ENCODE measurements at regions of chr6 and their contacts with region 1.

Region 1: GRCh38 chr6:107820338-107821261 is 3.5 kb downstream of the SCML4 start:
- DNase-seq: peak in 34 of 35 experiments; percentile 7 to 66 (median 36)
- ATAC-seq: peak in 3 of 4 experiments; percentile 14 to 27 (median 24)
- H3K4me3 ChIP-seq: peak overlapping the region; percentile 68 to 73
- H3K4me3 Mint-ChIP-seq: peak overlapping the region; percentile 89 to 96 (median 96)
- H3K27ac ChIP-seq: peak overlapping the region; percentile 93
- H3K27ac Mint-ChIP-seq: peak overlapping the region; percentile 96 to 97
- H3K4me1 ChIP-seq: peaks cover 56 to 69% of the 10 kb centered on the region in 2 experiments
- H3K4me1 Mint-ChIP-seq: peaks cover 77 to 92% (median 84%) of the 10 kb centered on the region in 3 donors
- H3K27me3 ChIP-seq: no peaks in the 10 kb centered on the region
- H3K27me3 Mint-ChIP-seq: no peaks in the 10 kb centered on the region

Region 2: GRCh38 chr6:106325336-106326178 is 1495.0 kb before region 1 on chr6 and contains the start of gene ATG5:
- CTCF ChIA-PET with region 1: no interaction called
- POLR2A ChIA-PET with region 1: interaction called in 1 of 2 experiments, 11 read pairs
- DNase-seq: peak; percentile 99 to 100 (median 100)
- ATAC-seq: peak; percentile 93 to 95 (median 94)
- H3K4me3 ChIP-seq: peak within 1 kb of the TSS; percentile 82 to 84
- H3K4me3 Mint-ChIP-seq: peak within 1 kb of the TSS; percentile 97 to 100 (median 99)
- H3K27ac ChIP-seq: peak within 1 kb of the TSS; percentile 84
- H3K27ac Mint-ChIP-seq: peak within 1 kb of the TSS; percentile 94 to 96
- H3K4me1 ChIP-seq: peaks cover 15 to 25% of the 10 kb centered on the region in 2 experiments
- H3K4me1 Mint-ChIP-seq: peaks cover 42 to 53% (median 51%) of the 10 kb centered on the region in 3 donors
- H3K27me3 ChIP-seq: peaks cover 0 to under 1% of the 10 kb centered on the region in 2 experiments
- H3K27me3 Mint-ChIP-seq: peaks cover 16 to 19% of the 10 kb centered on the region in 2 donors
- total RNA-seq, gene ATG5: 20.4 to 28.7 (median 23.7) TPM

Region 3: GRCh38 chr6:106534564-106534982 is 1286.0 kb before region 1 on chr6:
- CTCF ChIA-PET with region 1: no interaction called
- POLR2A ChIA-PET with region 1: no interaction called
- DNase-seq: peak in 4 of 35 experiments; percentile 17 to 42 (median 34)
- ATAC-seq: peak; percentile 7 to 77 (median 47)
- H3K4me3 ChIP-seq: no peak overlapping the region
- H3K4me3 Mint-ChIP-seq: peak overlapping the region in 1 of 3 donors; percentile 37
- H3K27ac ChIP-seq: peak overlapping the region; percentile 1
- H3K27ac Mint-ChIP-seq: peak overlapping the region; percentile 84 to 88
- H3K4me1 ChIP-seq: peaks cover 19 to 28% of the 10 kb centered on the region in 2 experiments
- H3K4me1 Mint-ChIP-seq: peaks cover 69 to 90% (median 86%) of the 10 kb centered on the region in 3 donors
- H3K27me3 ChIP-seq: no peaks in the 10 kb centered on the region
- H3K27me3 Mint-ChIP-seq: no peaks in the 10 kb centered on the region

Region 4: DNA sequence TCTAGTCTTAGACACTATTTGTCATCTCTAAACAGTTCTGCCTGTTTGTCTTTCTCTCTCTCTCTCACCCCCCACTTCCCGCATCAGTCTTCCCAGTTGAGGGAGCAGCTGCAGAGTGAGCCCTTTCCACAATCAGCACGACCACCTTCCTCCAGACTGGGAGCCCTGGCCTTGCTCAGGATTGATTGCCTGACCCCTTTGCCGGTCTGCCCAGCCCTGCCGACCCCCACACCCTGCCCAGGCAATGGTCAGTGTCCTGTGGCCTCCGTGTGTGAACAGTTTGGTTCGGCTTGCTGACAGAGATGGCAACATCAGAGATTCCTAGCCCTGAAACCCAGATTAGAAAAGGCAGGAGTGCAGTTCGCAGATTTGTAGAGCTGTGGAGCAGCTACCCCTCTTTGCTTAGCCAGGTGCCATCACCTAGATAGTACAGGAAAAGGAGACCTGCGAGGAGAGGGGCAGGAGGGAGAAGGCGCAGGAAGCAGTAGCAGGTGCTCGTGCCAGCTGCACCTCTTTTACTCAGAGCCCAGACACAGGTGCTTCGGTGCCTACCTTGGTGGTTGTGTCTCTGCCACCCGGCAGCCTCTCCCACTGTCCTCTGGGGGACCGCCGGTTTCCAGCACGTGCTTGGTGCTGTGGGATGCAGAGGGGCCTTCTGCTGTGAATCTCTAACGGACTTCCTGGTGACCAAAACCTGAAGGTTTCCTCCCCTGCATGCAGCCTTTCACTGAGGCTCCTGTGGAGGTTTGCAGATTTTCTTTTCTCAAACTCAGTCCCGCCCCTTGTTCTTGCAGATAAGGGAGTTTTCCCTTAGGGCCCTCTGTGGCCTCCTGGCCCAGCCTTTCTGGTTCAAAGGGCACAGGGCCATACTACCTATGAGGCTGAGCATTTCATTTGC is 88.9 kb before region 1 on chr6:
- CTCF ChIA-PET with region 1: interaction called, 3 to 19 read pairs
- POLR2A ChIA-PET with region 1: interaction called, 6 to 16 read pairs
- DNase-seq: peak in 21 of 35 experiments; percentile 17 to 55 (median 36)
- ATAC-seq: peak; percentile 49 to 62 (median 60)
- H3K4me3 ChIP-seq: peak overlapping the region; percentile 71 to 79
- H3K4me3 Mint-ChIP-seq: peak overlapping the region; percentile 94 to 97 (median 94)
- H3K27ac ChIP-seq: peak overlapping the region; percentile 78
- H3K27ac Mint-ChIP-seq: peak overlapping the region; percentile 96 to 99
- H3K4me1 ChIP-seq: peaks cover 52 to 75% of the 10 kb centered on the region in 2 experiments
- H3K4me1 Mint-ChIP-seq: peaks cover 90 to 95% (median 94%) of the 10 kb centered on the region in 3 donors
- H3K27me3 ChIP-seq: no peaks in the 10 kb centered on the region
- H3K27me3 Mint-ChIP-seq: no peaks in the 10 kb centered on the region

Region 5: DNA sequence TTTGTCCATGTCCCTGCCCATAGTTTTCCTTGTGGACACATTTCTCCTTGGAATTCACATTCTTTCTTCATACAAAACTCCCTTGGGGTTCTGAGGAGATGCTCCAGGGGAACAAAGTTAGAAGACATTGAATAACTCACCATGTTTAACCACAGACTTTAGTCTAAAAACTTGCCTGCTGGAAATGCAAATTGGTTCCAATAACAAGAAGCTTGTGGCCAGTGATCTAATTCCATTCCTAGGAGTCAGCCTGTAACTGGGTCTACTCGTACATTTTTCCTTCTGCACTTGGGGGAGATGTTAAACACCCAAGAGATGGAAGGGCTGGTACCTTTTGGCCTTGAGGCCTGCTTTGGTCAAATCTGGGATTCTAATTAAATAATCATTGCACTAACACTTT is 56.7 kb before region 1 on chr6:
- CTCF ChIA-PET with region 1: no interaction called
- POLR2A ChIA-PET with region 1: interaction called in 1 of 2 experiments, 11 read pairs
- DNase-seq: no peak
- ATAC-seq: no peak
- H3K4me3 ChIP-seq: no peak overlapping the region
- H3K4me3 Mint-ChIP-seq: no peak overlapping the region
- H3K27ac ChIP-seq: no peak overlapping the region
- H3K27ac Mint-ChIP-seq: no peak overlapping the region
- H3K4me1 ChIP-seq: peaks cover 0 to 2% of the 10 kb centered on the region in 2 experiments
- H3K4me1 Mint-ChIP-seq: peaks cover 29 to 40% (median 32%) of the 10 kb centered on the region in 3 donors
- H3K27me3 ChIP-seq: no peaks in the 10 kb centered on the region
- H3K27me3 Mint-ChIP-seq: no peaks in the 10 kb centered on the region

Region 6: DNA sequence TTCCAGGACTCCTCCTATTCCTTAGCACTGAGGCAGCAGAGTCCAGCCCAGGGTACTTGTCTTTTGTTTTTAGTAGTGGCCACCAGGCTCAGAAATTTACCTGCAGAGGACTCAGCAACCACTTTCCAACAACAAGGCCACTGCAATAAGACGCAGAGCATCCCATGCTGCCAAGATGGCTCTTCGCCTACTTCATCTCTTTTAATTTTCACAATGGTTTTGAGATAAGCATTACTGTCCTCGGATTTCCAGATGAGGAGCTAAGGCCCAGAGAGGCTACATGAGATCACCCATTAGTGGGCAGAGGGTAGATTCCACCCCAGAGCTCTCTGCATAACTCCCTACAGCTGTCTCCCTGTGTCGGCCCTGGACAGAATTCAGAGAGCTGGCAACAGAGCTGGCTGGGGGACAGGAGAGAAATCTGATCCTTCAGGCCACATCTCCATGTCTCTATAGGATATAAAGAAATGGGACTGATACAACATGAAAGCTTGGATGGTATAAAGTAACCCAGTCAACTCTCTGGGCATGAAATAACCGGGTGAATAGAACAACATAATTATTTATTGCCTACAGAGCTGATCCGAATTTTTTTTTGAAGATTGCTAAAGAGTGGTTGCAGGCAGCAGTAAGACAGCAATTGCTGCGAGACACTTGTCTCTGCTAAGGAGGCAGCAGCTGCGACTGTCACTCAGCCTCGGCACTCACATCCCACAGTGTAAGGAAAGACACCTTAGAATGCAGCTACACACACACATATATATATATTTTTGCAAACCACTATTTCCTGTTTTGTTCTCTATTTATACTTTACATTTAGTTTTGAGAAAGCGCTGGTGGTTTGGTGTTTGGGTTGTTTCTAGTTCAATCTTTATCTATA is 33.7 kb before region 1 on chr6:
- CTCF ChIA-PET with region 1: interaction called, 7 to 8 read pairs
- POLR2A ChIA-PET with region 1: interaction called, 8 to 18 read pairs
- DNase-seq: peak in 34 of 35 experiments; percentile 20 to 76 (median 50)
- ATAC-seq: peak; percentile 73 to 85 (median 80)
- H3K4me3 ChIP-seq: peak overlapping the region; percentile 15 to 46
- H3K4me3 Mint-ChIP-seq: peak overlapping the region; percentile 68 to 73 (median 68)
- H3K27ac ChIP-seq: peak overlapping the region; percentile 72
- H3K27ac Mint-ChIP-seq: peak overlapping the region; percentile 85 to 98
- H3K4me1 ChIP-seq: peaks cover 69 to 77% of the 10 kb centered on the region in 2 experiments
- H3K4me1 Mint-ChIP-seq: peaks cover 85 to 91% (median 89%) of the 10 kb centered on the region in 3 donors
- H3K27me3 ChIP-seq: no peaks in the 10 kb centered on the region
- H3K27me3 Mint-ChIP-seq: no peaks in the 10 kb centered on the region

Region 7: DNA sequence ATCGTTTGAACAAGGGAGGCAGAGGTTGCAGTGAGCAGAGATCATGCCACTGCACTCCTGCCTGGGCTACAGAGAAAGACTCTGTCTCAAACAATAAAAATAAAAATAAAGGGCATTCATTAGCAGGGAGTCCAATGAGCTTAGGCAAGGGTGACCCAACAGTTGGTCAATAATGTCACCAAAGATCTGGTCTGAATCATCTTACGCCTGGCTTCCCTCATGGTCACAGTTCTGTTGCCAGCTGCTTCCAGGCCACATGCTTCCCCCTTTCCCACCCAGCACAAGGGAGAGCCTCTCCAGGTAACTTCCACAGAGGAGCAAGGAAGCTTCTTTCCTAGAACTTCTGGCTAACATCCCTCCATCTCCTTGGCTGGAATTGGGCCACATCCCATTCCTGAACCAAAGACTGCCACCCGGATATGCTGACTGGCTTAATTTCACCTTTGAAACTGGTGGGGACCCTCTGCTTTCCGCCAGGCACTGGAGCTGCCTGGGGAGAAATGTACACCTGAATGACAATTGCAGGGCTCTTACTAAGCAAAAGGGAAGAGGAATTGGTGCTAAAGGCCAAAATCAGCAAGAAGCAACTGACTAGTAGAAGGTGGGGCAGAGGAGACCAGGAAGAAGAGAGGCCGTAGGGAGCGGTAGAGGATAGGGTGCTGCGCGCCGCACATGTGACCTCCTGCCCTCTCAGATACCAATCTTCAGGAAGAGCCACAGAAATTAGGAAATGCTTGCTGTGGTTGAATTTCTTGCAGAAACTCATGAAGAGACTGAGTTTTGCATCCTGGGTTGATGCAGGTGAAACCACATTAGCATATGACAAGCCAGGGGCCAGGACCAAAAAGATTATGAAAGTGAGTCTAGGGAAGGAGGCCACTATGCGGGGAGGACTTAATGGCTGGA is 11.8 kb after region 1 on chr6:
- CTCF ChIA-PET with region 1: no interaction called
- POLR2A ChIA-PET with region 1: interaction called, 5 to 10 read pairs
- DNase-seq: no peak
- ATAC-seq: peak; percentile 19 to 56 (median 36)
- H3K4me3 ChIP-seq: no peak overlapping the region
- H3K4me3 Mint-ChIP-seq: peak overlapping the region in 2 of 3 donors; percentile 21 to 27
- H3K27ac ChIP-seq: no peak overlapping the region
- H3K27ac Mint-ChIP-seq: peak overlapping the region; percentile 75 to 82
- H3K4me1 ChIP-seq: peaks cover 5 to 19% of the 10 kb centered on the region in 2 experiments
- H3K4me1 Mint-ChIP-seq: peaks cover 24 to 29% (median 24%) of the 10 kb centered on the region in 3 donors
- H3K27me3 ChIP-seq: no peaks in the 10 kb centered on the region
- H3K27me3 Mint-ChIP-seq: no peaks in the 10 kb centered on the region

Measured in T-cell (primary cell).